AG04449 (cell line): ENCODE measurements at regions of chr1 and their contacts with region 1.

Region 1: DNA sequence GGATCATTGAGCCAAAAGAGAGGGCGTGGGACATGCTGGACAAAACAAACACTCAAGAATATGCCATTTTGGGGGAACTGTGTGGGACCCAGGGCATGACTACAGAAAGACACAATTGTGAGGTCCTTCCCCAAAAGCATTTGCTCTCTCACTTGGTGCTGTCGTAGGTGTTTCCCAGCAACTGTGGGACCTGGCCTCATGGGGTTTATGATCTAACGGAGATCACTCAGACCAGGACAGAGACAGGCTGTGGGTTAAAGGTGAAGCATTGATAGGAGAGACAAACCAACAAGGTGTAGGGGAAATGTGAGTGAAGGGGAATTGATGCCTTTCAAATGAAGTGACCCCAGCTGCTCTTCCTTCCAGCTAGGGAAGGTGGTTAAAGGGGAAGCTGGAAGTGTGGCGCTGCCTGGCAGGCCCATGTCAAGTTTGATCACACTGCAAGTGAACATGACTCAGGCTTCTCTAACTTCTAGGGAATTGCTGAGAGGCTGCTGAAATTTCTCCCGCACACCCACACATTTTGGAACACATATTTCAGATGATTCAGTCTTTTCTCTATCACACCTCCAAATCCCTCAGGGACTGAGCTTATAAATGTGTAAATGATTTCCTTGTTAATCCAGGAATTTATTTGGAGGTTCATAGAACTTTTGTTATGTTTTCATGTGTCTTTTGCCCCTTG is 30.2 kb downstream of the TRAF5 start:
- DNase-seq: no peak
- H3K4me3 ChIP-seq: no peak overlapping the region
- CTCF ChIP-seq: no peak

Region 2: DNA sequence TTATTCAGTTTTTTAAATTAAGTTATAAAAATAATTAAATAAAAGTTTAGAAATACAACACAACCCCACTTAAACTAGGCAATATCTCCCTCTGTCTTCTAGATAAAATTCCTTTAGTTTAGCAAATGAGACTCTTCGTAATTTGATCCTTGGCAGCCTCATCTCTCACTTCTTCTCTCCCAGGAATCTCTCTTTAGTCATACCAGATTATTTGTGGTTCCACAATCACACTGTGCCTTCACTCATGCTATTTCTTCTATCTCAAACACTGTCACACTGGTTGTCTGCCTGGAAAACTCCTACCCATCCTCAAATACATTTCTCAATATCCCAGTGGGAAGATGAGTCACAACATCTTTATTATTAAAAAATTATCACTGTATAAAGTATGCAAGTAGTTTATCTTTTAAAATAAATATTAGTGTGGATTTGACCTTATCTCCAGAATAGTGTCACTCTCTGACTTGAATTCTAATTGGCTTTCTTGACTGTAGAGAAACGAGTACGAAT is 418.4 kb before region 1 on chr1:
- CTCF ChIA-PET with region 1: no interaction called
- POLR2A ChIA-PET with region 1: no interaction called
- DNase-seq: no peak
- H3K4me3 ChIP-seq: no peak overlapping the region
- CTCF ChIP-seq: no peak

Region 3: DNA sequence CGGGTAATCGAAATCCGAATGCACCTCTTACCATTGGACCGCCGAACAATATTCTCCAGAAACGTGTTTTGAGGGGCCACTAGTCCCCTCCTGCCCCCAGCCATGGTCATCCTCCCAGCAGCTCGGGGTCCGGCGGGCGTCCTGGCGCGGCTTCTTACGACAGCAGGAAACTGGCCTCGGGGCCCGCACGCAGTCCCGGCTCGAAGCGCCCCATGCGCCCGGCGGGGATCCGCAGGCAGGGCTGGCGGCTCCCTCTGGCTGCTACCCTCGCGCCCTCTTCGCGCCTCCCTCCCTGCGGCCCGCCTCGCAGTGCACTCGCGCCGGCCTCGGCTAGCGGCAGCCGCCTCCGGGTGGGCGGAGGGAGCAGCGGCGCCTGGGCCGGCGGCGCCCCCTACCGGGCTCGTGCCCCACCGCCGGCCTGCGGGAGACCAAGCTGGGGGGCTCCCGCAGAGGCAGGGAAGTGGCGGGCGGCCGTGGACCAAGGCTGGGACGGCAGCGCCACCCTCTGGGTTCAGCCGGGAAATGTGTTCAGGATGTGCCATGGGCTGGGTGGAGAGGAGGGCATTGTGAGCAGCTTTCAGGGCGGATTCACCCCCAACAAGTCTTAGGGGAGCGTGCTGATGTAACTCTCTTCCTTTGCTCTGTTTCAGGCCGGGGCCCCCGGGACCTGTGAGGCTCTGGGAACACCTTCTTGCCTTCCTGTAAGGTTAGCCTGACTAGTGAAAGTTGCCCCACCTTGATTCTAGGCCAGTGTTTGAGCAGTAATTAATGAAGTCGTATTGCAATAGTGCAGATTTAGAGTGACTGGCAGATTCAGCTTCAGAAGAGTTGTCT is 222.8 kb before region 1 on chr1 and contains the start of gene KCNH1:
- CTCF ChIA-PET with region 1: no interaction called
- POLR2A ChIA-PET with region 1: no interaction called
- DNase-seq: no peak
- H3K4me3 ChIP-seq: peak within 1 kb of the TSS; percentile 66
- CTCF ChIP-seq: peak; percentile 83

Region 4: DNA sequence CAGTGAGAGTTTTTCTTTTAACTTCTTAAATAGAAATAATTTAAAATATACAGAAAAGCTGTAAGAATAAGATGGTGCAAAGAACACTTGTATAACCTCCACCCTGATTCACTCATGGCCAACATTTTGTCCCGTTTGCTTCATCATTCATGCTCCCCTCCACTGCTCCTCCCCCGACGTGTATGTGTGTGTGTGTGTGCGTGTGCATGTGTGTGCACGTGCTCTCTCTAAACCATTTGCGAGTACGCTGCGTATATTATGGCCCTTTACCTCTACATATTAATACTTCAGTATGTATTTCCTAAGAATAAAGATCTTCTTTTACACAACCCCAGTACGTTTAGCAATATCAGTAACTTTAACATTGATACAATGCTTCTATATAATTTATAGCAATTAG is 12.8 kb after region 1 on chr1:
- CTCF ChIA-PET with region 1: interaction called, 11 read pairs
- POLR2A ChIA-PET with region 1: no interaction called
- DNase-seq: no peak
- H3K4me3 ChIP-seq: no peak overlapping the region
- CTCF ChIP-seq: no peak